ENCODE measurements at regions of chr9 and their contacts with region 1.

Region 1: DNA sequence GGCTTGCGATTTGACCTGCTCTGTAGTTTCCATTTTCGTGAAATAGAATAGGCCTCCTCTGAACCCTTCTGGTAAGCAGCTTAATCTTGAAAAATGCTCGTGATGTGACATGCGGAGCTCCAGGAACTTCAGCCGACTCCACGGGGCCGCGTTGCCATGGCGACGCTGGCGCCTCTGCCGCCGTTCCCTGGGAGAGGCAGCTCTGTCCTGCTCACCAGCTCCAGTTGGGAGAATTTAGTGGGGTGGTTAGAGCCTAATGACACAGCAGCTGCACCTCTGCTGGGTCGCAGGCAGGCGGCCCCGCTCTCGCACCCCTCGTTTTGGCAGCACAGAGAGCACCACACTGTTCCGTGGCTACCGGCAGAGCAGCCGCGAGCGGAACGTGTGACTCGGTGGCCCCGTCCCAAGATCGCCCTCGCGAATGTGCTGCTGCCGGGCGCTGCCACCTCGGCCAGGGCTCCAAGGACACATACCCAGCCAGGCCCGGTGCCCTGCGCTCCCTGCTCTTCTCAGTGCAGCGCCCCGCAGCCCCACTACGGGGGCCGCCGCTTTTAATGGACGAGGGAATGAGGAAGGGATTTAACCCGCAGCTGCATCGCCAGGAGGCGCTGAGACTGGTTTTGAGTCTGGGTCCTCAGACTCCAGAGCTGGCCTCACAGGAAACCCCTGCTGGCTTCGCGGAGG is 131.2 kb upstream of the LMX1B start:
- DNase-seq: no peak
- H3K4me3 ChIP-seq: peak overlapping the region in 2 of 7 experiments; percentile 40 to 48
- H3K27ac ChIP-seq: no peak overlapping the region
- H3K4me1 ChIP-seq: peaks cover 0 to 8% (median 3%) of the 10 kb centered on the region in 4 experiments
- H3K27me3 ChIP-seq: no peaks in the 10 kb centered on the region

Region 2: GRCh38 chr9:126420643-126421577 is 61.6 kb before region 1 on chr9:
- CTCF ChIA-PET with region 1: no interaction called
- POLR2A ChIA-PET with region 1: no interaction called
- DNase-seq: no peak
- H3K4me3 ChIP-seq: no peak overlapping the region
- H3K27ac ChIP-seq: no peak overlapping the region
- H3K4me1 ChIP-seq: peaks cover 0 to 5% (median under 1%) of the 10 kb centered on the region in 4 experiments
- H3K27me3 ChIP-seq: no peaks in the 10 kb centered on the region

Region 3: GRCh38 chr9:126471084-126471624 is 11.3 kb before region 1 on chr9:
- CTCF ChIA-PET with region 1: interaction called, 20 read pairs
- POLR2A ChIA-PET with region 1: interaction called, 3 read pairs
- DNase-seq: peak; percentile 95 to 99 (median 98)
- H3K4me3 ChIP-seq: peak overlapping the region in 4 of 7 experiments; percentile 40 to 61 (median 46)
- H3K27ac ChIP-seq: peak overlapping the region in 1 of 2 experiments; percentile 52
- H3K4me1 ChIP-seq: peaks cover 35 to 79% (median 60%) of the 10 kb centered on the region in 4 experiments
- H3K27me3 ChIP-seq: no peaks in the 10 kb centered on the region

Region 4: DNA sequence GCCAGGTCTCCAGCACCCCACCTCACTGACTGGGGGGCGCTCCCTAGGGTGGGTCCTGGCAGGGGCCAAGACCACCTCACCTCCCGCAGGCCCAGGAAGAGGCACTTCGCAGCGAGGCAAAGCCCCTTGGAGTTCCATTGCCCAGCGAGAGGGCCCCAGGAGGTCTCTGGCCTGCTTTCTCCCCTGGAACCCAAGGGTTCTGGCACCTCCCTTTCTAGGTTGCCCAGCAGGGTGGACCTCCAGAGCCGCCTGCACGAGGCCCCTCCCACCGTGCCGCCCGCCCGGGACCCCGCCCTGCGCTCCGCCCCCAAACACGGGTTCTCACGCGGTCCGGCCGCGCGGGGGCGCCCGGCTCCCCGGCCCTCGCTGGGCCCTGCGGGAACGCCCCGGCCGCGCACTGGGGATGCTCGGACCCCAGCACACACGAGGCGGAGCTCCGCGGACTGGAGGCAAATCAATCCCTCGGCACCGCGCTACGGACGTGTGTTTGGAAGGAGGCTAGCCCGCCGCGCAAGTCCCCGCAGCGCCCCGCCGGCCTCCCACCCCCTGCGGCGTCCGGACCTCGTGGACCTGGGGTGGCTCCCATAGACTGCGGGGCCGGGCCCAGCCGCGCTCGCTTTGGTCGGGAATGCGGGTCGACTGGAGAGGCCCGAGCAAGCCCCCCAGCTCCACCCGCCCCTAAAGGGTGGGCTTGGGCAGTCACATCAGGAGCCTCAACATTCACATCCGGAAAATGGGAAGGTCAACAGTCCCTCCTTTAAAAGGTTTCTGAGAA is 31.7 kb after region 1 on chr9:
- CTCF ChIA-PET with region 1: no interaction called
- POLR2A ChIA-PET with region 1: no interaction called
- DNase-seq: peak in 2 of 3 donors; percentile 59 to 65
- H3K4me3 ChIP-seq: peak overlapping the region in 3 of 7 experiments; percentile 22 to 64 (median 43)
- H3K27ac ChIP-seq: no peak overlapping the region
- H3K4me1 ChIP-seq: peaks cover 0 to 21% (median 16%) of the 10 kb centered on the region in 4 experiments
- H3K27me3 ChIP-seq: peaks cover 2 to 30% (median 16%) of the 10 kb centered on the region in 5 experiments